Colonic mucosa (tissue), 4 donors: ENCODE measurements at regions of chr3 and their contacts with region 1.

Region 1: DNA sequence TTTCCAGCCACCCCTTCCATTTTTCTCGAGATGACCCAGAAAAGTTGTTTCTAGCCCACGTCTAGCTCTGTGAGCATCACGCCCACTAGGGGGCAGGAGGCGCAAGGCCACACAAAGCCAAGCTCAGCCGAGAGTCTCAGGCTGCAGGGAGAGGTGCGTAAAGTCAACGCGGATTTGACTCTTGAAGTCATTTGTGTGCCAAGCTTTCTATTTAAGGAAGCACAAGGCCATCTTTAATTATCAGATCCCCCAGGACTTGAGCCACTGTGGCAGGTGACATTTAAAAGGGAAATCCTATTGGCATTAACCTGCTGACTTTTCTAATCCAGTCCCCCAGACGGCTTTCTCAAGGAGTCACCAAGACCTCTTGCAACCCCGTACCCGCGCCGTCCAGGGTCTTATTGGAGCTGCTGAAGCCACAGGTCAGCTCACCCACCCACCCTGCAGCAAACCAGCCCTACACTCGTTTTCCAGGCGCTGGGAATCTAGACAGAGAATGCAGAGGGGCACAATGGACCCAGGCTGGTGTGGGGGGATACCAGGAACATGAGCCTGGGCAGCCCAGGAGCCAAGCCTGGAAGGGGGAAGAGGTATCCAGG is 62.1 kb downstream of the CAPN7 start:
- DNase-seq: peak; percentile 85
- H3K4me3 ChIP-seq: no peak overlapping the region
- H3K27ac ChIP-seq: no peak overlapping the region
- H3K4me1 ChIP-seq: no peaks in the 10 kb centered on the region
- H3K27me3 ChIP-seq: no peaks in the 10 kb centered on the region
- CTCF ChIP-seq: peak; percentile 93

Region 2: GRCh38 chr3:15332405-15333098 is 64.4 kb after region 1 on chr3 and contains the start of gene SH3BP5:
- intact Hi-C with region 1: loop called (anchors 5 kb)
- DNase-seq: peak; percentile 69
- H3K4me3 ChIP-seq: peak within 1 kb of the TSS; percentile 62
- H3K27ac ChIP-seq: peak within 1 kb of the TSS; percentile 34
- H3K4me1 ChIP-seq: no peaks in the 10 kb centered on the region
- H3K27me3 ChIP-seq: no peaks in the 10 kb centered on the region
- CTCF ChIP-seq: peak; percentile 63
- total RNA-seq, gene SH3BP5: 5.5 to 9.3 TPM

Region 3: DNA sequence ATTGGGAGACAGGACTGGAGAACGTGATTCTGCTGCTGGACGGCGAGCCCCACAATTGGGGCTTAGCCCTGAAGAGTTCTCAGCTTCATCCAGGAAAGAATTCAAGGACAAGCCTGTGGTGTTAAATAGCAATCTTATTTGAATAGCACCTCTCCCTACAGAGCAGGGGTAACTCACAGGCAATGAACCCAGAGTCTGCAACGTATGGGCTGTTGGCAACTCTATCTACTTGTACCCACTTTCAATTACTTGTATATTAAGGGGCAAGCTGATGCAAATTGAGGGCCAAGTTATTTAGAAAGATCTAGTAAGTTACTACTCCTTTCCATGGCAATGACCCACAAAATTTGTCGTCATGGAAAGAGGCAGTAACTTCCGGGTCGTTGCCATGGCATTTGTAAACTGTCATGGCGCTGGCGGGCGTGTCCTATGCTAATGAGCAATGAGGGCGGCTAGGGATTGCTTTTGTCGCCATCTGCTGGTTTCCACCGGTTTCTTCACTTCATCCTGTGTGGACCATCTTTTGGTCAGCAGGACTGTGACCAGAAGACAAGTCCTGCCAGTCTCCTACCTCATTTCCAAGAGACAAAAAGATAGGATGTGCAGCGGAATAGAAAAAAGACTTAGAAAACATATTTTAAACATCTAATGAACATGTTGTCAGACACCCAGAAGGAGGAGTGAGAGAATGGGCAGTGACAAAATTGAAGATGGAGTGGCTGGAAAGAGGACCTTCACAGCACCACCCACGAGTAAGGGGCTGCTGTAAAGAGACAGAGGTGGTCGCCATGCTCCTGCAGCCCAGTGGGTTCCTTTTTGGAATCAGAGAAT is 110.0 kb after region 1 on chr3:
- intact Hi-C with region 1: loop called (anchors 5 kb)
- DNase-seq: peak; percentile 97
- H3K4me3 ChIP-seq: no peak overlapping the region
- H3K27ac ChIP-seq: no peak overlapping the region
- H3K4me1 ChIP-seq: no peaks in the 10 kb centered on the region
- H3K27me3 ChIP-seq: no peaks in the 10 kb centered on the region
- CTCF ChIP-seq: peak; percentile 75